Breast epithelium (tissue), 4 donors: ENCODE measurements at regions of chr1 and their contacts with region 1.

Region 1: DNA sequence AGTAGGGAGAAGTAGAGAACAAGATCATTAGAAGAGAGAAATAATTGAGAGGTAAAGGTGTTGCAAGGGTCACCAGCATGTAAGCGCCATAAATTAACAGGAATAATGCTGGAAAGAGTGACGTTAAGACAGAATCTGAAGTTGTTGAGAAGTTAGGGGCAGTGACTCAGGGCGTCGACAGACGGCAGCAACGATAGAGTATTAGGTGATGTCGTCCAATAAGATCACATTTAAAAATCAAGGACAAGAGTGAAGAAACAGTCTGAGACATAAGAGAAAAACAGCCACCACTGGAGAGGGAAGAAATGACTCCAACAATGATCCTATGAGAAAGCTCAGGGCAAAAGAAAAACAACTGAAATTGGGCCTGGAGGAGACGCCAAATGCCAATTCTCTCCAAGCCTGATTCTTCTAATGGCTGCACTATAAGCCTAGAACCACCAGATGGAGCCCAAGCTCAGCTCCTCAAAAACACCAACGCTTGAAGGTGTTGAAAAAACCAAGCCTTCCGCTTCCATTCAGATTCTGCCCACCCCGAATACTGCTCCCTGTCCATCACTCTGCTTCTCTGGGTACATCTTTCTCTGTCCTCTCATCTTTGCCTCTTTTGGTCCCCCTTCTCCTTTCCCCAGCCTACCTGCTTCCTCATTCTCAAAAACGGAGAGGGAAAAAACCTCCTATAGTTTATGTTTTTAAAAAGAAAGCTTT is 70.0 kb downstream of the LUZP1 start:
- DNase-seq: peak in 1 of 2 donors; percentile 53
- H3K4me3 ChIP-seq: no peak overlapping the region
- H3K27ac ChIP-seq: peak overlapping the region in 1 of 2 donors; percentile 37
- H3K4me1 ChIP-seq: peaks cover 3 to 5% of the 10 kb centered on the region in 2 donors
- H3K27me3 ChIP-seq: no peaks in the 10 kb centered on the region
- CTCF ChIP-seq: peak; percentile 90 to 95 (median 94)
- POLR2A ChIP-seq: no peak

Region 2: DNA sequence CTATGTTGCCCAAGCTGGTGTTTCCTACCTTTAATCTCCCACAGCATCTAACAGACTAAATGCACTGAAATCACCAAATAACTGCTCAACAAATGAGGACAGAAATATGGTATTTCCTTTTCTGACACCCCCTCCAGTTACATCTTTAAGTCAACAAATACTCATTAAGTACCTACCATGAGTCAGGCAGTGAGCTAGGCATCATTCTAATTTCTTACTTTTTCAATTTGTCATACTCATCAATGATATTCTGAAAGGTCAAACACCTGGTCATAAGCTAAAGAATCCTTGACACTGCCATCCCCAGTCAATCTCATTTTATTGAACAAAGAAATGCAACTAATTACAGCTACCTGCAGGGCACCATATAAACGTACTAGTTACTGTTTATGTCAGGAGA is 33.4 kb after region 1 on chr1:
- intact Hi-C with region 1: no loop called
- DNase-seq: no peak
- H3K4me3 ChIP-seq: no peak overlapping the region
- H3K27ac ChIP-seq: no peak overlapping the region
- H3K4me1 ChIP-seq: no peaks in the 10 kb centered on the region
- H3K27me3 ChIP-seq: no peaks in the 10 kb centered on the region
- CTCF ChIP-seq: no peak
- POLR2A ChIP-seq: no peak

Region 3: DNA sequence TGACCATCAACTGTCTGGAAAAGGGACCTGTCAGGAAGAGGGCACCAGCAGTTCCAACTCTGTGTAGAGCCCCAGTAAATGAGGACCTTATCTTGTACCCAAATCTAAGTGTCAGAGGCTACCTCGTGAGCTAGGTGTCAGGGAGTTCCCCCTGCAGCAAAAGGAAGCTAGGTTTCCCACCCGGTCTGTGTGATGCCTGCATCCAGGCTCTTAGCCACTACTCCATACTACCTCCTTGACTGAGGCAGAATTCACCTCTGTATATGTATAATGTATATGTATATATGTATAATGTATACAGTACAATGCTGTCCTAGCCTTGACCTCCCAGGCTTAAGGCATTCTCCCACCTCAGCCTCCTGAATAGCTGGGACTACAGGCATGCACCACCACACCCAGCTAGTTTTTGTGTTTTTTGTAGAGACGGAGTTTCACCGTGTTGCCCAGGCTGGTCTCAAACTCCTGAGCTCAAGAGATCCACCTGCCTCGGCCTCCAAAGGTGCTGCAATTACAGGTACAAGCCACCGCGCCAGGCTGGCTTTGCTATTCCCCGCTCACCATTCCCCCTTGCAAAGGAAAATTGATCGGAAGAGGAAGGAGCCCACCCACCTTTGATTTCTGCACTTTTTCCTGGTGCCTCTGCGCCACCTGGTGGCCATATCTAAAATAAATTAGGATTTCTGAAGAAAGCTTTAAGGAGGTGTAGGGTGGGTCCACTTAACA is 85.8 kb after region 1 on chr1:
- intact Hi-C with region 1: loop called (anchors 5 kb)
- DNase-seq: no peak
- H3K4me3 ChIP-seq: peak overlapping the region; percentile 24 to 61 (median 40)
- H3K27ac ChIP-seq: no peak overlapping the region
- H3K4me1 ChIP-seq: peaks cover 0 to 4% of the 10 kb centered on the region in 2 donors
- H3K27me3 ChIP-seq: no peaks in the 10 kb centered on the region
- CTCF ChIP-seq: peak; percentile 87 to 98 (median 91)
- POLR2A ChIP-seq: no peak

Region 4: GRCh38 chr1:23838401-23838866 is 739.8 kb after region 1 on chr1:
- intact Hi-C with region 1: no loop called
- DNase-seq: peak; percentile 27 to 65
- H3K4me3 ChIP-seq: peak overlapping the region; percentile 15 to 57 (median 45)
- H3K27ac ChIP-seq: no peak overlapping the region
- H3K4me1 ChIP-seq: no peaks in the 10 kb centered on the region
- H3K27me3 ChIP-seq: no peaks in the 10 kb centered on the region
- CTCF ChIP-seq: no peak
- POLR2A ChIP-seq: no peak